PC-9 (cell line): ENCODE measurements at regions of chr6 and their contacts with region 1.

Region 1: DNA sequence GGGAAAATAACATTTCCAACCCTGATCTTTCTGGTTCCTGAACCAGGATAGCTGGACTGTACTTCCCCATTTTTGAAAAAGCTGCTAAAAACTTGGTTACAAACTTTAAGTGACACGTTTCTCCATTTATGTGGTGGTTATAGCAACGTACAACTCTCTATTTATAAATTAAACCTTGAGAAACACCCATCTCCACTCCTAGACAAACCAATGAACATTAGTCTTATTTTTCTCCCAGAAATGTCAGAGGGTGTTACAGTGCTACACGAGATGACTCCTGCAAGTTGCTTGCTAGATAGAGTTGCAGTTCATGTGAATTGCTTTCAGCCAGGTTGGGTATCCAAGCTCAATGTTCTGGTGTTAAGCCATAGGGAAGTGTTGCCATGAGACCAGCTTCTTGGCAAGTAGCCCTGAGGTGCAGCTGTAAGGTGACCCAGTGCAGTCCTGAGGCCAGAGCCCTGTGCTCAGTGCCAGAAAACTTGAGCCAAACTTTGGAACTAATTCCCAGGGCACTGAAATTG is 51.3 kb upstream of the REV3L start:
- DNase-seq: peak in 1 of 2 experiments; percentile 44
- H3K4me3 ChIP-seq: no peak overlapping the region
- H3K27ac ChIP-seq: no peak overlapping the region
- H3K4me1 ChIP-seq: no peaks in the 10 kb centered on the region
- H3K27me3 ChIP-seq: no peaks in the 10 kb centered on the region
- CTCF ChIP-seq: no peak

Region 2: GRCh38 chr6:111222341-111222740 is 311.9 kb before region 1 on chr6:
- CTCF ChIA-PET with region 1: no interaction called
- POLR2A ChIA-PET with region 1: interaction called, 17 read pairs
- intact Hi-C with region 1: no loop called
- DNase-seq: no peak
- H3K4me3 ChIP-seq: no peak overlapping the region
- H3K27ac ChIP-seq: no peak overlapping the region
- H3K4me1 ChIP-seq: peaks cover 2% of the 10 kb centered on the region; the same call in 1 of the 2 replicates
- H3K27me3 ChIP-seq: no peaks in the 10 kb centered on the region
- CTCF ChIP-seq: no peak